HEK293 (cell line): ENCODE measurements at regions of chr6 and their contacts with region 1.

Region 1: DNA sequence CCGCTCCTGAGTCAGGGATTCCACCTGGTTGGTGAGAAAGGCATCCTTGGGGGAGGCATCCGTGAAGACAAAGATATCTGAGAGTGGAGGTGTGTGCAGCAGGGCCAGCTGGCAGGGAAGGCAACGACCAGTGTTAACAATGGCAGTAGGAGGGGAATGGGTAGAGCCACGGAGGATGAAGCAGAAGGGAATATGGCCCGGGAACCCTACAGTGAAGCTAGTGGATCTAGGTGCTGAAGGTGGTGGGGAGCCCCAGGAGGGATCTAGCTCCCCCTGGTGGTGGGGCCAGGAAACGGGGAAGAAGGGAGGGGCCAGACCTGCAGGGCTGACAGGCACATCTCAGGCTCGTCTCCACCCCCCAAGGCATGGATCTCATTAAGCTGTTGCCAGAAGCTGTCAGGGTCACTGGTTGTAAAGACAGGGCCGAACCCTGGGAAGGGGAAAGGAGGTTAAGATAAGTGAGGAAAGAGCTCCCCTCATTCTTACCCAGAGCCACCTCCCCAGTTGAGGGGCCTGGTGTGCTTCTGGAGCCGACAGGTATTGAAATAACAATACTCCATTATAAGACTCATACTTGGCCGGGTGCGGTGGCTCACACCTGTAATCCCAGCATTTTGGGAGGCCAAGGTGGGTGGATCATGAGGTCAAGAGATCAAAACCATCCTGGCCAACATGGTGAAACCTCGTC is 7.3 kb downstream of the VWA7 start:
- H3K4me3 ChIP-seq: no peak overlapping the region
- H3K27ac ChIP-seq: no peak overlapping the region
- H3K4me1 ChIP-seq: no peaks in the 10 kb centered on the region
- CTCF ChIP-seq: peak; percentile 93

Region 2: DNA sequence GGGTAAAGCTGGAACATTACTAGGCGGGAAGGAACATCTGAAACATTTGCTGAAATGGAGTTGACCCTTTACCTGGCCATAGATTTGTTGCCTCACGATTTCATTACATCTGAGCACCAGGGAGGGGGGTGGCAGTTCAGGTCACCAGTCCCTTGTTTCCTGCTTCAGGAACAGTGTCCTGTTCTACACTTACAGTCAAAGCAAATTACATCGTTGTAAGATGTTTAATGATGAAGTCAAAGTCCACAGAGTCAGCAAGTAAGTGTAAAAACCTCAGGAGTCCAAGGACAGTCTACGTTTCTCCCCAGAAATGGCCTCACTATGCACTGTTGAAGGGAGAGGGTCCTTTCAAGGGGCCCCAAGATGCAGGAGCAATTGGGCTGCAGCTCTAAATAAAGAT is 280.7 kb before region 1 on chr6:
- CTCF ChIA-PET with region 1: no interaction called
- POLR2A ChIA-PET with region 1: no interaction called
- H3K4me3 ChIP-seq: no peak overlapping the region
- H3K27ac ChIP-seq: no peak overlapping the region
- H3K4me1 ChIP-seq: no peaks in the 10 kb centered on the region
- CTCF ChIP-seq: no peak

Region 3: GRCh38 chr6:31689249-31690110 is 80.3 kb before region 1 on chr6:
- CTCF ChIA-PET with region 1: interaction called, 10 read pairs
- POLR2A ChIA-PET with region 1: interaction called, 3 read pairs
- H3K4me3 ChIP-seq: no peak overlapping the region
- H3K27ac ChIP-seq: no peak overlapping the region
- H3K4me1 ChIP-seq: no peaks in the 10 kb centered on the region
- CTCF ChIP-seq: no peak; the same call in 1 of the 2 replicates

Region 4: GRCh38 chr6:31739639-31740396 is 30.0 kb before region 1 on chr6 and contains the start of gene MSH5:
- CTCF ChIA-PET with region 1: interaction called, 39 read pairs
- POLR2A ChIA-PET with region 1: interaction called, 8 read pairs
- H3K4me3 ChIP-seq: peak within 1 kb of the TSS; percentile 61
- H3K27ac ChIP-seq: peak within 1 kb of the TSS; percentile 87
- H3K4me1 ChIP-seq: peaks cover 29% of the 10 kb centered on the region
- CTCF ChIP-seq: no peak

Region 5: GRCh38 chr6:31784098-31784925 is 14.5 kb after region 1 on chr6:
- CTCF ChIA-PET with region 1: interaction called, 50 read pairs
- POLR2A ChIA-PET with region 1: interaction called, 3 read pairs
- H3K4me3 ChIP-seq: no peak overlapping the region
- H3K27ac ChIP-seq: no peak overlapping the region
- H3K4me1 ChIP-seq: no peaks in the 10 kb centered on the region
- CTCF ChIP-seq: no peak

Region 6: GRCh38 chr6:31952140-31952805 is 182.4 kb after region 1 on chr6:
- CTCF ChIA-PET with region 1: interaction called, 10 read pairs
- POLR2A ChIA-PET with region 1: no interaction called
- H3K4me3 ChIP-seq: no peak overlapping the region
- H3K27ac ChIP-seq: no peak overlapping the region
- H3K4me1 ChIP-seq: no peaks in the 10 kb centered on the region
- CTCF ChIP-seq: peak; percentile 77

Region 7: GRCh38 chr6:32244946-32245398 is 475.1 kb after region 1 on chr6:
- CTCF ChIA-PET with region 1: no interaction called
- POLR2A ChIA-PET with region 1: no interaction called
- H3K4me3 ChIP-seq: no peak overlapping the region
- H3K27ac ChIP-seq: no peak overlapping the region
- H3K4me1 ChIP-seq: no peaks in the 10 kb centered on the region
- CTCF ChIP-seq: peak; percentile 87